Panc1 (cell line): ENCODE measurements at regions of chr10 and their contacts with region 1.

Region 1: DNA sequence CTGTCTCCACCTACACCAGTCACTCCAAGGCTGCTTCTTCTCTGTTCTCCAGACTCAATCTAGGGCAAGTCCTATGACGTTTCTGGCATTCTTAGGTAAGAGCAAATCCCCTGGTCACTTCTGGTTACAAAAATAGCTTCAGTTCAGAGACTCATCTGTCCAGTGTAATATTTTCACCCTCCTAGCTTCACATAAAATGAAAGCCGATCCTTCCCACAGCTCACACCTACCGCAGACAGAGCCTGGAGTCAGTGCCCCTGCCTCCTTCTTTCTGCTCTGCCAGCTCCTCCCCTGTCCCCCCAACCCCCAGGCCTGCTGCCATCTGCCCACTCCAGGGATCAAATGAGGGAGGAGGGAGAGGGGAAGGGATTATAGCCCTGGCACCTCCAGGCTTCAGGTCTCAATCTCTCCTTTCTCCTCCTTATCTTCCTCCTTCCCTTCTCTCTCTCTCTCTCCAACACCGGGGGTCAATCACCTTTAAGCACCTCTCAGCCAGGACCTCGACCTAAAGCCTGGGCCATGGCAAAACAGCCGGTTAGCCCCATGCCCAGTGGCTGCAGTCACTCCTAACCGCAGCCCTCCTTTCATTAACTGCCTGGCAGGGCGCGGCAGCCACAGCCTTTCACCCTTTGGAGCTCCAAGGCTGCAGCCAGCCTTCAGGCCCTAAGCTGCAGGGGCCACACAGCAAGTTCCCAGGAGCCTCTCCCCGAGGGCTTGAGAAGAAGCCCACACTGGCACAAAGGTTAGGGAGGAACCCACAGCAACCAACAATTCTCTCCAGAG is 292.6 kb upstream of the MGMT start:
- DNase-seq: no peak
- ATAC-seq: no peak
- H3K4me3 ChIP-seq: no peak overlapping the region
- H3K27ac ChIP-seq: no peak overlapping the region
- H3K4me1 ChIP-seq: no peaks in the 10 kb centered on the region
- H3K27me3 ChIP-seq: peaks cover 2% of the 10 kb centered on the region; the same call in 1 of the 2 replicates
- CTCF ChIP-seq: no peak

Region 2: DNA sequence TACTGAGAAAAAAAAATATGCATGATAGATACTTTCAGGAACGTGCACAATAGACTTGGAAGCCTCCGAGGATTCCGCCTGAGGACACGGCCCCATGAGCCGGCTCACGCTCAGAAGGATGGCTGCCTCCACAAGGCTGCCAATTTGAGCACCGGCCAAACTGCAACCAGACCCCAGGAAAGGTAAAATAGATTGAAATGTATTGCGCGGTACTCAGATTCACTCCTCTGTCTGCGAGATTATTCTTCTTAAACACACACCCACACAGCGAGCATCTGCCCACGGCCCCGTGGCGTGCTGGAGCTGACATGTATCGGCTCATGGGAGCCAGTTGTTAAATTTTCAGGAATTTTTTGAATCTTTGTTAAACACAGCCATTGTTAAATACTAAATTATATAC is 395.0 kb before region 1 on chr10:
- CTCF ChIA-PET with region 1: no interaction called
- POLR2A ChIA-PET with region 1: no interaction called
- in situ Hi-C with region 1: no loop called
- intact Hi-C with region 1: no loop called
- DNase-seq: no peak
- ATAC-seq: no peak
- H3K4me3 ChIP-seq: no peak overlapping the region
- H3K27ac ChIP-seq: no peak overlapping the region
- H3K4me1 ChIP-seq: no peaks in the 10 kb centered on the region
- H3K27me3 ChIP-seq: peaks cover 4% of the 10 kb centered on the region; the same call in 1 of the 2 replicates
- CTCF ChIP-seq: no peak

Region 3: GRCh38 chr10:128963211-128964099 is 211.0 kb before region 1 on chr10:
- CTCF ChIA-PET with region 1: no interaction called
- POLR2A ChIA-PET with region 1: interaction called, 16 read pairs
- in situ Hi-C with region 1: no loop called
- intact Hi-C with region 1: no loop called
- DNase-seq: no peak
- ATAC-seq: no peak
- H3K4me3 ChIP-seq: no peak overlapping the region
- H3K27ac ChIP-seq: no peak overlapping the region
- H3K4me1 ChIP-seq: no peaks in the 10 kb centered on the region; the same call in 1 of the 2 replicates
- H3K27me3 ChIP-seq: peaks cover 14% of the 10 kb centered on the region; the same call in 1 of the 2 replicates
- CTCF ChIP-seq: no peak

Region 4: GRCh38 chr10:129274748-129275474 is 100.5 kb after region 1 on chr10:
- CTCF ChIA-PET with region 1: no interaction called
- POLR2A ChIA-PET with region 1: no interaction called
- in situ Hi-C with region 1: no loop called
- intact Hi-C with region 1: no loop called
- DNase-seq: no peak
- ATAC-seq: no peak
- H3K4me3 ChIP-seq: no peak overlapping the region
- H3K27ac ChIP-seq: no peak overlapping the region
- H3K4me1 ChIP-seq: no peaks in the 10 kb centered on the region
- H3K27me3 ChIP-seq: no peaks in the 10 kb centered on the region
- CTCF ChIP-seq: 0 out of 2 replicates have a peak, but pooled peaks have one; percentile 15